Activated T-helper 1 cell treated with anti-CD3 and anti-CD28 coated beads, Interleukin-12 subunit alpha, Interleukin-12 subunit beta, Interleukin-2, Interleukin-4 antibody, amounts not matched to agents 30 ng/mL and 10 ng/mL and 1 ng/mL, durations not matched to agents 14 hours and 24 hours and 36 hours (primary cell): ENCODE measurements at regions of chr4 and their contacts with region 1.

Region 1: GRCh38 chr4:103046416-103047290 is 27.1 kb upstream of the SLC9B1 start:
- DNase-seq: peak; percentile 20
- H3K4me3 Mint-ChIP-seq: no peak overlapping the region
- H3K27ac Mint-ChIP-seq: no peak overlapping the region
- H3K4me1 Mint-ChIP-seq: peaks cover 19% of the 10 kb centered on the region
- H3K27me3 Mint-ChIP-seq: no peaks in the 10 kb centered on the region

Region 2: GRCh38 chr4:103091601-103092223 is 45.1 kb after region 1 on chr4:
- intact Hi-C with region 1: loop called (anchors 1 kb)
- DNase-seq: peak; percentile 27
- H3K4me3 Mint-ChIP-seq: peak overlapping the region; percentile 71
- H3K27ac Mint-ChIP-seq: peak overlapping the region; percentile 73
- H3K4me1 Mint-ChIP-seq: peaks cover 26% of the 10 kb centered on the region
- H3K27me3 Mint-ChIP-seq: no peaks in the 10 kb centered on the region